ENCODE measurements at regions of chr10 and their contacts with region 1.

Region 1: DNA sequence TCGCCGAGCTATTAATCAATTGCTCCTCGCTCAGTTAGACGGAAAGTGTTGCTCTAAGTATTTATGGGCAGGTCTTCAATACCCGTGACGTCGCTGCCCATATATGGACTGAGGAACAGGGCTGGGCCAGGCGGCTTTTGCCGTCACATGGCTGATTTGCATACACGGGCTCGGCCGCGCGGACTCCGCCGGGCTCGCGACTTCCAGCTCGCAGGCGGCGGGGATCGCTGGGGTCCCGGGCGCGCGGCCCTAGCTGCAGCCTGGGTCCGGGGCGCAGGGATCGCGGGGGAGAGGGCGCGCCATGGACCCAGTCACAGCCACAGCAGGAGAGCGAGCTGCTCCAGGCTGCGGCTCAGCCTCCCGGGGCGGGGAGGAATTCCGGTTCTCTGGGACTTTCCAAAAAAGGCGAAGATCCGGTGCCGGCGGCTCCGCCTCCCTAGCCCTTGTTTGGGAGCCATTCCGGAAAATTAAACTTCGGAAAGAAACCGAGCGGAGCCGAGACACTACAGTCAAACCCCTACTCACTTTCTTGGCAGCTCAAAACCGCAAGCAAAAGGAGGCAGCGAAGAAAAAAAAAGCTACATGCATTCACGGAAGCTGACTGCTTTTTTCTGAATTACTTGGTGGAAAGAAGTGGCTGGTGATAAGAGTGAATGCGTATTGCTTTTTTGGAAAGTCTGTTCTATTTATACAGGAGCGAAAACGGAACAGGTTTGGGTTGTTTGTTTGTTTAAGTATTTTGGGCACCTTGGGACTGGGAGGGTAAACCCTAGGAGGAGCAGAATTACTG is at the start of gene EGR2:
- DNase-seq: peak; percentile 98
- ATAC-seq: peak; percentile 74
- H3K4me3 ChIP-seq: peak within 1 kb of the TSS; percentile 66 to 88 (median 72)
- H3K4me3 Mint-ChIP-seq: peak within 1 kb of the TSS; percentile 100
- H3K27ac ChIP-seq: peak within 1 kb of the TSS; percentile 77 to 84
- H3K27ac Mint-ChIP-seq: peak within 1 kb of the TSS; percentile 99
- H3K4me1 ChIP-seq: peaks cover 33 to 42% of the 10 kb centered on the region in 2 donors
- H3K4me1 Mint-ChIP-seq: peaks cover 54% of the 10 kb centered on the region
- H3K27me3 ChIP-seq: peaks cover 0 to 37% (median 9%) of the 10 kb centered on the region in 4 experiments
- H3K27me3 Mint-ChIP-seq: peaks cover 7% of the 10 kb centered on the region
- CTCF ChIP-seq: no peak
- total RNA-seq, gene EGR2: 6.3 and 6.6 TPM in 2 replicates

Region 2: DNA sequence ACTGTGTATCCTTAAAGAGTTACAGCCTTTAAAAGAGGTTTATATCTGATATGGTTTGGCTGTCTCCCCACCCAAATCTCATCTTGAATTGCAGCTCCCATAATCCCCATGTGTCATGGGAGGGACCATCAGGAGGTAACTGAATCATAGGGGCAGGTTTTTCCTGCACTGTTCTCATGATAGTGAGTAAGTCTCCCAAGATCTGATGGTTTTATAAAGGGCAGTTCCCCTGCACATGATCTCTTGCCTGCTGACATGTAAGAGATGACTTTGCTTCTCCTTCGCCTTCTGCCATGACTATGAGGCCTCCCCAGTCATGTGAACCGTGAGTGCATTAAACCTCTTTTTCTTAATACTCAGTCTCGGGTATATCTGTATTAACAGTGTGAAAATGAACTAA is 557.6 kb before region 1 on chr10:
- CTCF ChIA-PET with region 1: no interaction called
- POLR2A ChIA-PET with region 1: no interaction called
- intact Hi-C with region 1: no loop called
- DNase-seq: no peak
- ATAC-seq: no peak
- H3K4me3 ChIP-seq: no peak overlapping the region
- H3K4me3 Mint-ChIP-seq: no peak overlapping the region
- H3K27ac ChIP-seq: no peak overlapping the region
- H3K27ac Mint-ChIP-seq: no peak overlapping the region
- H3K4me1 ChIP-seq: no peaks in the 10 kb centered on the region
- H3K4me1 Mint-ChIP-seq: no peaks in the 10 kb centered on the region
- H3K27me3 ChIP-seq: no peaks in the 10 kb centered on the region
- H3K27me3 Mint-ChIP-seq: no peaks in the 10 kb centered on the region
- CTCF ChIP-seq: no peak

Region 3: DNA sequence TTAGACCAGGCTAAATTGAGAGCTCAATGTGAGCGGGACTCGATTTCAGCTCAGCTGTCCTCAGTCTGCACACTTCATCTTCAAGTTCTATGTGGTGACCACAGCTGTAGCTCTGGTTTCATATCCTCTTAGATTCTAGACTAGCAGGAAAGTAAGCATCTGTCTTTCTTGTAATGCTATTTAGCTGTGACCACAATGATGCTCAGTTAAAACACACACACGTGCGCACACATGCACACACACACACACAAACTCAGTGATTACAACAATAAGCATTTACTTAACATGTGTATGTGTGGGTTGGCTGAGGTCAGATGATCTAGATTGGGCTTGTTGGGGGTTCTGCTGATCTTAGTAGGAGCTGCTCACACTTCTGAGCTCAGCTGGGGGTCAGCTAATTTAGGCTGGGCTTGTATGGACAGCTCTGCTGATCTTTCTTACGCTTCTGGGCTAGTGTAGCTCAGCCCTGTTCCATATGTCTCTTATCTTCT is 359.9 kb before region 1 on chr10:
- CTCF ChIA-PET with region 1: interaction called, 13 read pairs
- POLR2A ChIA-PET with region 1: no interaction called
- intact Hi-C with region 1: loop called (anchors 2 kb)
- DNase-seq: peak; percentile 85
- ATAC-seq: peak; percentile 93
- H3K4me3 ChIP-seq: no peak overlapping the region
- H3K4me3 Mint-ChIP-seq: peak overlapping the region; percentile 63
- H3K27ac ChIP-seq: peak overlapping the region in 1 of 2 donors; percentile 1
- H3K27ac Mint-ChIP-seq: peak overlapping the region; percentile 86
- H3K4me1 ChIP-seq: peaks cover 30 to 33% of the 10 kb centered on the region in 2 donors
- H3K4me1 Mint-ChIP-seq: peaks cover 34% of the 10 kb centered on the region
- H3K27me3 ChIP-seq: no peaks in the 10 kb centered on the region
- H3K27me3 Mint-ChIP-seq: no peaks in the 10 kb centered on the region
- CTCF ChIP-seq: no peak

Region 4: DNA sequence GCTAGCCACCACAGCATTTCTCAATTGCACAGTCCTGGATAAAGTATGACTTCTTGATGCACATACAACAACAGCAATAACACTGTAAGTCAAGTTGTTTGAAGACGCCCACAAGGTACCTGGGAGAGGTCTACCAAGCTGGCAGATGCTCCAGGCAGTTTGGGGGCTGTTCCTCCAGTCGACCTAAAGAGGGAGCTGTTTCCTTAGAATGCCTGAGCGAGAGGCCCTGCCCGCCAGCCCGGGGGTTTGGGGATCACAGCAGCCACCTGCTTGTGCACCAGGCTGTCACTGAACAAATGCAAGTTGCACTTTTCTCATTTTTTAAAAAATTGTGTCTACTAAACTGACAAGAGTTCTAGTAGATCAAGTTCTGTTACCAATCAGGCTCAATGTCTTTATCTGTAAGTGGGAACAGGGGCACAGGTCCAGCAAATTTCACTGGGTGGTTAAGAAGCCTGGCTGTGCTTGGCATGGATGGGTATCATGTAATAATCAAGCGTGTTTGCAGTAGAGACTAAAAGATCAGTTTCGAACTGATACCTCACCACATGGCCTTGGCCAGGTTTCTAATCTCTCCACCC is 205.8 kb before region 1 on chr10:
- CTCF ChIA-PET with region 1: interaction called, 204 read pairs
- POLR2A ChIA-PET with region 1: interaction called, 5 read pairs
- intact Hi-C with region 1: loop called (anchors 1 kb)
- DNase-seq: peak; percentile 87
- ATAC-seq: peak; percentile 97
- H3K4me3 ChIP-seq: no peak overlapping the region
- H3K4me3 Mint-ChIP-seq: no peak overlapping the region
- H3K27ac ChIP-seq: no peak overlapping the region
- H3K27ac Mint-ChIP-seq: no peak overlapping the region
- H3K4me1 ChIP-seq: peaks cover 5% of the 10 kb centered on the region in 2 donors
- H3K4me1 Mint-ChIP-seq: peaks cover 12% of the 10 kb centered on the region
- H3K27me3 ChIP-seq: no peaks in the 10 kb centered on the region
- H3K27me3 Mint-ChIP-seq: no peaks in the 10 kb centered on the region
- CTCF ChIP-seq: peak; percentile 86

Region 5: GRCh38 chr10:62681211-62681940 is 135.2 kb before region 1 on chr10:
- CTCF ChIA-PET with region 1: interaction called, 25 read pairs
- POLR2A ChIA-PET with region 1: interaction called, 11 read pairs
- intact Hi-C with region 1: loop called (anchors 2 kb)
- DNase-seq: peak; percentile 82
- ATAC-seq: peak; percentile 97
- H3K4me3 ChIP-seq: no peak overlapping the region
- H3K4me3 Mint-ChIP-seq: peak overlapping the region; percentile 21
- H3K27ac ChIP-seq: no peak overlapping the region
- H3K27ac Mint-ChIP-seq: peak overlapping the region; percentile 51
- H3K4me1 ChIP-seq: peaks cover 14 to 17% of the 10 kb centered on the region in 2 donors
- H3K4me1 Mint-ChIP-seq: peaks cover 16% of the 10 kb centered on the region
- H3K27me3 ChIP-seq: no peaks in the 10 kb centered on the region
- H3K27me3 Mint-ChIP-seq: peaks cover 4% of the 10 kb centered on the region
- CTCF ChIP-seq: peak; percentile 53

Region 6: DNA sequence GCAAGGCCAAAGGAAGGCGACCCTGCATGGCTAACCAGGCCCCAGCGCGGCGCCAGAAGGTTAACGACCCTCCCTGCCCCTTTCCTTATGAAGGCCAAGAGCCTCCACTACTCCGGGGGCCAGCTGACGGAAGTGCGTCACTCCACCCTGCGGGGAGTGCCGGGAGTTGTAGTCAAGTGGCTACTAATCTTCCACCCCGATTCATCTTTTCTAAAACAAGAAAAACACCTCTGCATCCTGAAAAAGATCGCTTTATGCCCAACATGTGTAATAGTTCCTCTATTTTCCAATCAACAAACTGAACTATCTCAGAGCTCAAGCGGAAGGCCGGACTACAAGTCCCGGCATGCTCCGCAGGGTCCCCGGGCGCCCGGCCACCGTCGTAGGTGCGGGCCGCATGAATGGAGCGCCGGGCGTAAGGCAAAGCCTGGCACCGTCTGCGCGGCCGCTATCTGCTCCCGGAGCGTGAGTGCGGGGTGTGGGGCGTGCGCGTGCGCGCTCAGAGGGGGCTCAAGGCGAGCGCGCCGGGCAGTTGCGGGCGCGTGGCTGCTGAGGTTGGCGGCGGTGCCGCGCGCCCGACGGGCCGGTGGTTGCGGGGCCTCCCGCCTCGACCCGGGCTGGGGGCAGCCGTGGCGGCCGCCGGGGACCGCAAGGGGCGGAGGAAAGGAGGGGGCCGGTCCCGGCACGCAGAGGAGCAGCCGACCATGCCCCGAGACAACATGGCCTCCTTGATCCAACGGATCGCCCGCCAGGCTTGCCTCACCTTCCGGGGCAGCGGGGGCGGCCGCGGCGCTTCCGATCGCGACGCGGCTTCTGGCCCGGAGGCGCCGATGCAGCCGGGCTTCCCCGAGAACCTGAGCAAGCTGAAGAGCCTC is 11.9 kb before region 1 on chr10 and contains the start of gene ADO:
- CTCF ChIA-PET with region 1: interaction called, 42 read pairs
- POLR2A ChIA-PET with region 1: interaction called, 18 read pairs
- intact Hi-C with region 1: loop called (anchors 1 kb)
- DNase-seq: peak; percentile 92
- ATAC-seq: peak; percentile 87
- H3K4me3 ChIP-seq: peak within 1 kb of the TSS; percentile 79 to 99 (median 92)
- H3K4me3 Mint-ChIP-seq: peak within 1 kb of the TSS; percentile 98
- H3K27ac ChIP-seq: peak within 1 kb of the TSS; percentile 96 to 98
- H3K27ac Mint-ChIP-seq: peak within 1 kb of the TSS; percentile 99
- H3K4me1 ChIP-seq: peaks cover 26 to 29% of the 10 kb centered on the region in 2 donors
- H3K4me1 Mint-ChIP-seq: peaks cover 44% of the 10 kb centered on the region
- H3K27me3 ChIP-seq: no peaks in the 10 kb centered on the region
- H3K27me3 Mint-ChIP-seq: no peaks in the 10 kb centered on the region
- CTCF ChIP-seq: no peak
- total RNA-seq, gene ADO: 18.4 and 19.1 TPM in 2 replicates

Region 7: GRCh38 chr10:62946278-62946677 is 129.8 kb after region 1 on chr10:
- CTCF ChIA-PET with region 1: no interaction called
- POLR2A ChIA-PET with region 1: no interaction called
- intact Hi-C with region 1: no loop called
- DNase-seq: no peak
- ATAC-seq: no peak
- H3K4me3 ChIP-seq: no peak overlapping the region
- H3K4me3 Mint-ChIP-seq: no peak overlapping the region
- H3K27ac ChIP-seq: no peak overlapping the region
- H3K27ac Mint-ChIP-seq: no peak overlapping the region
- H3K4me1 ChIP-seq: no peaks in the 10 kb centered on the region
- H3K4me1 Mint-ChIP-seq: no peaks in the 10 kb centered on the region
- H3K27me3 ChIP-seq: no peaks in the 10 kb centered on the region
- H3K27me3 Mint-ChIP-seq: peaks cover 11% of the 10 kb centered on the region
- CTCF ChIP-seq: no peak

Region 8: GRCh38 chr10:63268798-63269503 is 452.4 kb after region 1 on chr10:
- CTCF ChIA-PET with region 1: no interaction called
- POLR2A ChIA-PET with region 1: no interaction called
- intact Hi-C with region 1: loop called (anchors 10 kb)
- DNase-seq: peak; percentile 93
- ATAC-seq: peak; percentile 89
- H3K4me3 ChIP-seq: peak overlapping the region; percentile 64 to 100 (median 95)
- H3K4me3 Mint-ChIP-seq: peak overlapping the region; percentile 100
- H3K27ac ChIP-seq: peak overlapping the region; percentile 85 to 94
- H3K27ac Mint-ChIP-seq: peak overlapping the region; percentile 99
- H3K4me1 ChIP-seq: peaks cover 14 to 18% of the 10 kb centered on the region in 2 donors
- H3K4me1 Mint-ChIP-seq: peaks cover 31% of the 10 kb centered on the region
- H3K27me3 ChIP-seq: no peaks in the 10 kb centered on the region
- H3K27me3 Mint-ChIP-seq: no peaks in the 10 kb centered on the region
- CTCF ChIP-seq: peak; percentile 43